Activated CD4-positive, alpha-beta T cell treated with anti-CD3 and anti-CD28 coated beads for 36 hours (primary cell): ENCODE measurements at regions of chr17 and their contacts with region 1.

Region 1: GRCh38 chr17:28667870-28668269 is 5.9 kb downstream of the SUPT6H start:
- DNase-seq: no peak
- ATAC-seq: no peak
- H3K4me3 Mint-ChIP-seq: no peak overlapping the region
- H3K27ac Mint-ChIP-seq: no peak overlapping the region
- H3K4me1 Mint-ChIP-seq: peaks cover 39% of the 10 kb centered on the region
- H3K27me3 Mint-ChIP-seq: no peaks in the 10 kb centered on the region

Region 2: GRCh38 chr17:28371245-28372202 is 296.3 kb before region 1 on chr17 and contains the start of gene SARM1:
- CTCF ChIA-PET with region 1: no interaction called
- POLR2A ChIA-PET with region 1: no interaction called
- intact Hi-C with region 1: no loop called
- DNase-seq: peak; percentile 95
- ATAC-seq: peak; percentile 95
- H3K4me3 Mint-ChIP-seq: peak within 1 kb of the TSS; percentile 76
- H3K27ac Mint-ChIP-seq: peak within 1 kb of the TSS; percentile 86
- H3K4me1 Mint-ChIP-seq: peaks cover 22% of the 10 kb centered on the region
- H3K27me3 Mint-ChIP-seq: no peaks in the 10 kb centered on the region
- total RNA-seq, gene SARM1: 18.1 to 21.9 TPM

Region 3: DNA sequence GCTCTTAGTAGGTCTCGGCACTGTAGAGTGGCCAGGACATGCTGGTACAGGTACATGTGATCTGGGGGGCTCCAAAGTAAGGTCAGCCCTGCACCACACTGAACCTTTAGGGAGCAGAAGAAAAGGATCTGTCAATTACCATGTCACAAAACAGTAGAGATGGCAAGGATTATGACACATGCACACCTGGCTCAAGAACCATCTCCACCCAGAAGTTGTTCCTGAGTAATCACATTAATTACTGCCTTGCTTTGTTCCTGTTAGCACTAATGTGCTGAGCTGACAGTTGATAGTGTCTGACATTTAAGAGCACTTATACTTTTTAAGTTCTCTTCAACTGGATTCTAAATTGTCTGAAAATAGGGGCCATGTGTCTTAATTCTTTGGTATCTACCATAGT is 32.4 kb before region 1 on chr17:
- CTCF ChIA-PET with region 1: no interaction called
- POLR2A ChIA-PET with region 1: no interaction called
- intact Hi-C with region 1: loop called in 1 of 2 experiments (anchors 5 kb)
- DNase-seq: no peak
- ATAC-seq: no peak
- H3K4me3 Mint-ChIP-seq: no peak overlapping the region
- H3K27ac Mint-ChIP-seq: no peak overlapping the region
- H3K4me1 Mint-ChIP-seq: peaks cover 17% of the 10 kb centered on the region
- H3K27me3 Mint-ChIP-seq: no peaks in the 10 kb centered on the region